ENCODE measurements at regions of chr4 and their contacts with region 1.

Region 1: DNA sequence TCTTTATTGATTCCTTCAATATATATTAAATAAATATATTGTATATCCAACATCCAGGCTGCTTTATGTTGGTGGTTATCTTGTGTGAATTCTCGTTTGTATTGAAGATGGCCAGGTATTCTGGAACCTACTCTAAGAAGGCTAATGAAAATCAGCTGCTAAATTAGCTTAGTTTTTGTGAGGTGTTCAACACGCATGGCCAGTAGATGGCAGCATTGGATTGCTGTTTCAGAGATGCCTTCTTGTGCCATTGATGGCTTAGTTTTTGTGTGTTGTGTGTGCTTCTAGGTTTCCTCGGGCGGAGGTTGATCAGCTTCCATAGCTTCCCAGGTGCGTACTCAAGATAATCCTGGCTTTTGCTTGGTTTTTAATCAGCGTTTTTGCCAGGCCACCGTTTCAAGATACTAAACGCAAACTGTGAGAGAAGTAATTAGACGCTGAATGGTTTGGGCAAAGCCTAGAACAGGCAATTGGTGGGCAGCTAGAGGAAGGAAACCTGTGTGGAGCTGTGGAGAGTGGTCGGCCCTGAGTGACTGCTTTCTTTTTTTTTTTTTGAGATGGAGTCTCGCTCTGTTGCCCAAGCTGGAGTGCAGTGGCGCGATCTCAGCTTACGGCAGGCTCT is 15.1 kb downstream of the NOCT start:
- DNase-seq: peak; percentile 85
- ATAC-seq: peak; percentile 76
- H3K4me3 ChIP-seq: no peak overlapping the region
- H3K4me3 Mint-ChIP-seq: peak overlapping the region; percentile 1
- H3K27ac ChIP-seq: no peak overlapping the region
- H3K27ac Mint-ChIP-seq: no peak overlapping the region
- H3K4me1 ChIP-seq: peaks cover 18 to 20% of the 10 kb centered on the region in 2 donors
- H3K4me1 Mint-ChIP-seq: peaks cover 26% of the 10 kb centered on the region
- H3K27me3 ChIP-seq: no peaks in the 10 kb centered on the region
- H3K27me3 Mint-ChIP-seq: no peaks in the 10 kb centered on the region
- CTCF ChIP-seq: peak; percentile 87

Region 2: DNA sequence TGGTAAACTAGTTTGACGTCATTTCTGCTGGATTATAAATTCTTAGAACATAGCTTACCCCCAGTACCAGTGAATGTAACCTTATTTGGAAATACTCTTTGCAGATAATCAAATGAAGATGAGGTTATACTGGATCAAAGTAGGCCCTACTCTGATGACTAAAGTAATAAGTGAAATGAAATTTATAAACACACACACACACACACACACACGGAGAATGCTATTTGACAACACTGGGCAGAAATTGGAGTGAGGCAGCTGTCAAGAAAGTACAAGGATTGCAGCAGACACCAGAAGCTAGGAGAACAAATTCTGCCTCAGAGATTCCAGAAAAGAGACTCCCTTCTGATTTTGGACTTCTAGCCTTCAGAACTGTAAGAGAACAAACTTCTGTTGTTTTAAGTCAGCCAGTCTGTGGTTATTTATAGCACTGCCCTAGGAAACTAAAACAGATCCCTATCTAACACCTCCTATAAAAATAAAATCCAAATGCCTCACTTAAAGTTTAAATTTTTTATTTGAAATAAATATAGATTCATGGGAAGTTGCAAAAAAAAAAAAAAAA is 1947.1 kb before region 1 on chr4:
- CTCF ChIA-PET with region 1: no interaction called
- POLR2A ChIA-PET with region 1: no interaction called
- intact Hi-C with region 1: no loop called
- DNase-seq: no peak
- ATAC-seq: no peak
- H3K4me3 ChIP-seq: no peak overlapping the region
- H3K4me3 Mint-ChIP-seq: no peak overlapping the region
- H3K27ac ChIP-seq: no peak overlapping the region
- H3K27ac Mint-ChIP-seq: no peak overlapping the region
- H3K4me1 ChIP-seq: no peaks in the 10 kb centered on the region
- H3K4me1 Mint-ChIP-seq: no peaks in the 10 kb centered on the region
- H3K27me3 ChIP-seq: no peaks in the 10 kb centered on the region
- H3K27me3 Mint-ChIP-seq: no peaks in the 10 kb centered on the region
- CTCF ChIP-seq: no peak

Region 3: DNA sequence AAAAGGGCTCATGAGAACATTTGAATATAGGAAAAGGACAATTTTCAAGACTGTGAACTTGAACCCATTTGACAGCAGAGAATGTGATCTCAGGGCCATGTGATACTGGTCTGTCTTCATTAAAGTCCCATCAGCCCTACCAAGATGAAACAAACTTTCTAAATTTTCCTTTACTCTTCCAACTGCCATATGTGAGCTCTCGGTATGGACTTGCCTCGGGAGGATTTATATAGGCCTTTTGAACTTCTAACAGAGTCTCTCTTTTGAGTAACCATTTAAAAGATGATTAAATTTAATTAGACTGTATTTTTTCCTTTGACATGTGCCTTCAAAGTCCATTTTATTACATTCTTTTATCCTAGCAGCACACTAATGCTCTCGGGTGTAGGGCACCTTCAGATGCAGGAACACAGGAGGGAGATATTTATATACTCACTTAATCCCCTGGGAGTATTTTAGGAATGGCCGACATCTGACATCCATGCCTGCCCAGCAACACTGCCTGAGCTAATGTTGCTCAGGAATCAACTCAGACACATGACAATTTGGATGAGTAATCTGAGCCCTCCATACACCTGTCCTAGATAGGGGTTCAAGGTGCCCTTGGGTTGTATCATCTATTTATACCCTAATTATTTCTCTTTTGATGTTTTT is 943.5 kb before region 1 on chr4:
- CTCF ChIA-PET with region 1: no interaction called
- POLR2A ChIA-PET with region 1: no interaction called
- intact Hi-C with region 1: no loop called
- DNase-seq: no peak
- ATAC-seq: no peak
- H3K4me3 ChIP-seq: no peak overlapping the region
- H3K4me3 Mint-ChIP-seq: no peak overlapping the region
- H3K27ac ChIP-seq: no peak overlapping the region
- H3K27ac Mint-ChIP-seq: no peak overlapping the region
- H3K4me1 ChIP-seq: no peaks in the 10 kb centered on the region
- H3K4me1 Mint-ChIP-seq: no peaks in the 10 kb centered on the region
- H3K27me3 ChIP-seq: no peaks in the 10 kb centered on the region
- H3K27me3 Mint-ChIP-seq: peaks cover 14% of the 10 kb centered on the region
- CTCF ChIP-seq: no peak

Region 4: DNA sequence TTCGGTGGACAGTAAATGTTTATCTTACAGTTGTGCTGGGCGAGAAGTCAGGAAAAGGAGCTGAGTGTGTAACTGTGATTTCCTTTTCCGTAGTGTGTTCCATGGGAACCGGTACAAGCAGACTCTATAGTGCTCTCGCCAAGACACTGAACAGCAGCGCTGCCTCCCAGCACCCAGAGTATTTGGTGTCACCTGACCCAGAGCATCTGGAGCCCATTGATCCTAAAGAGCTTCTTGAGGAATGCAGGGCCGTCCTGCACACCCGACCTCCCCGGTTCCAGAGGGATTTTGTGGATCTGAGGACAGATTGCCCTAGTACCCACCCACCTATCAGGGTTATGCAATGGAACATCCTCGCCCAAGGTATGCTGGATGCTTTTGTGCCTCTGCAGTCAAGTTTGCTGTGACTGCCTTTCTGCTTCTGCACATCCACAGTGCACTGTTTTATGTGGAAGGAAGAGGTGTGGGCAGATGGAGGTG is 12.3 kb after region 1 on chr4:
- CTCF ChIA-PET with region 1: interaction called, 12 read pairs
- POLR2A ChIA-PET with region 1: interaction called, 3 read pairs
- intact Hi-C with region 1: no loop called
- DNase-seq: no peak
- ATAC-seq: no peak
- H3K4me3 ChIP-seq: no peak overlapping the region
- H3K4me3 Mint-ChIP-seq: no peak overlapping the region
- H3K27ac ChIP-seq: no peak overlapping the region
- H3K27ac Mint-ChIP-seq: no peak overlapping the region
- H3K4me1 ChIP-seq: no peaks in the 10 kb centered on the region
- H3K4me1 Mint-ChIP-seq: peaks cover 2% of the 10 kb centered on the region
- H3K27me3 ChIP-seq: no peaks in the 10 kb centered on the region
- H3K27me3 Mint-ChIP-seq: no peaks in the 10 kb centered on the region
- CTCF ChIP-seq: no peak

Region 5: DNA sequence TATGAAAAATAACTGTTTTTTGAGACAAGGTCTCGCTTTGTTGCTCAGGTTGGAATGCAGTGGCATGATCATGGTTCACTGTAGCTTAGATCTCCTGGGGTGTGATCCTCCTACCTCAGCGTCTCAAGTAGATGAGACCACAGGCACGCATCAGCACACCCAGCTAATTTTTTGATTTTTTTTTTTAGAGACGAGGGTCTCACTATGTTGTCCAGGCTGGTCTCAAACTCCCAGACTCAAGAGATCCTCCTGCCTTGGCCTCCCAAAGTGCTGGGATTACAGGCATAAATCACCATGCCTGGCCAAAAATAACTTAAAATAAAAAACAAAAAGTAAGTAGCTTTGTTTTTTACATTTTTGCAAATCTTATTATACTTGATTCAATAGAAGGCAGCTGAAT is 48.2 kb after region 1 on chr4:
- CTCF ChIA-PET with region 1: interaction called, 26 read pairs
- POLR2A ChIA-PET with region 1: no interaction called
- intact Hi-C with region 1: loop called (anchors 2 kb)
- DNase-seq: no peak
- ATAC-seq: no peak
- H3K4me3 ChIP-seq: no peak overlapping the region
- H3K4me3 Mint-ChIP-seq: no peak overlapping the region
- H3K27ac ChIP-seq: peak overlapping the region in 1 of 2 donors; percentile 39
- H3K27ac Mint-ChIP-seq: no peak overlapping the region
- H3K4me1 ChIP-seq: peaks cover 16 to 44% of the 10 kb centered on the region in 2 donors
- H3K4me1 Mint-ChIP-seq: peaks cover 56% of the 10 kb centered on the region
- H3K27me3 ChIP-seq: no peaks in the 10 kb centered on the region
- H3K27me3 Mint-ChIP-seq: no peaks in the 10 kb centered on the region
- CTCF ChIP-seq: no peak

Region 6: GRCh38 chr4:139099366-139099982 is 68.7 kb after region 1 on chr4:
- CTCF ChIA-PET with region 1: interaction called, 21 read pairs
- POLR2A ChIA-PET with region 1: no interaction called
- intact Hi-C with region 1: loop called (anchors 1 kb)
- DNase-seq: peak; percentile 87
- ATAC-seq: peak; percentile 75
- H3K4me3 ChIP-seq: no peak overlapping the region
- H3K4me3 Mint-ChIP-seq: no peak overlapping the region
- H3K27ac ChIP-seq: no peak overlapping the region
- H3K27ac Mint-ChIP-seq: no peak overlapping the region
- H3K4me1 ChIP-seq: no peaks in the 10 kb centered on the region
- H3K4me1 Mint-ChIP-seq: peaks cover 2% of the 10 kb centered on the region
- H3K27me3 ChIP-seq: no peaks in the 10 kb centered on the region
- H3K27me3 Mint-ChIP-seq: no peaks in the 10 kb centered on the region
- CTCF ChIP-seq: peak; percentile 89

Region 7: GRCh38 chr4:139295206-139295941 is 264.6 kb after region 1 on chr4:
- CTCF ChIA-PET with region 1: interaction called, 54 read pairs
- POLR2A ChIA-PET with region 1: no interaction called
- intact Hi-C with region 1: loop called (anchors 1 kb)
- DNase-seq: peak; percentile 96
- ATAC-seq: peak; percentile 98
- H3K4me3 ChIP-seq: peak overlapping the region; percentile 78 to 96 (median 91)
- H3K4me3 Mint-ChIP-seq: peak overlapping the region; percentile 97
- H3K27ac ChIP-seq: peak overlapping the region; percentile 89 to 92
- H3K27ac Mint-ChIP-seq: peak overlapping the region; percentile 96
- H3K4me1 ChIP-seq: peaks cover 16 to 23% of the 10 kb centered on the region in 2 donors
- H3K4me1 Mint-ChIP-seq: peaks cover 26% of the 10 kb centered on the region
- H3K27me3 ChIP-seq: no peaks in the 10 kb centered on the region
- H3K27me3 Mint-ChIP-seq: no peaks in the 10 kb centered on the region
- CTCF ChIP-seq: peak; percentile 93

Region 8: GRCh38 chr4:139619644-139620043 is 588.9 kb after region 1 on chr4:
- CTCF ChIA-PET with region 1: no interaction called
- POLR2A ChIA-PET with region 1: no interaction called
- intact Hi-C with region 1: no loop called
- DNase-seq: peak; percentile 15
- ATAC-seq: no peak
- H3K4me3 ChIP-seq: no peak overlapping the region
- H3K4me3 Mint-ChIP-seq: no peak overlapping the region
- H3K27ac ChIP-seq: no peak overlapping the region
- H3K27ac Mint-ChIP-seq: no peak overlapping the region
- H3K4me1 ChIP-seq: no peaks in the 10 kb centered on the region
- H3K4me1 Mint-ChIP-seq: no peaks in the 10 kb centered on the region
- H3K27me3 ChIP-seq: no peaks in the 10 kb centered on the region
- H3K27me3 Mint-ChIP-seq: peaks cover 9% of the 10 kb centered on the region
- CTCF ChIP-seq: peak; percentile 57

Region 9: GRCh38 chr4:139651282-139652194 is 620.8 kb after region 1 on chr4:
- CTCF ChIA-PET with region 1: interaction called, 82 read pairs
- POLR2A ChIA-PET with region 1: no interaction called
- intact Hi-C with region 1: no loop called
- DNase-seq: peak; percentile 82
- ATAC-seq: peak; percentile 81
- H3K4me3 ChIP-seq: no peak overlapping the region
- H3K4me3 Mint-ChIP-seq: no peak overlapping the region
- H3K27ac ChIP-seq: no peak overlapping the region
- H3K27ac Mint-ChIP-seq: no peak overlapping the region
- H3K4me1 ChIP-seq: no peaks in the 10 kb centered on the region
- H3K4me1 Mint-ChIP-seq: peaks cover 4% of the 10 kb centered on the region
- H3K27me3 ChIP-seq: no peaks in the 10 kb centered on the region
- H3K27me3 Mint-ChIP-seq: peaks cover 15% of the 10 kb centered on the region
- CTCF ChIP-seq: peak; percentile 98

Region 10: GRCh38 chr4:140448830-140449229 is 1418.1 kb after region 1 on chr4:
- CTCF ChIA-PET with region 1: no interaction called
- POLR2A ChIA-PET with region 1: no interaction called
- intact Hi-C with region 1: no loop called
- DNase-seq: no peak
- ATAC-seq: no peak
- H3K4me3 ChIP-seq: no peak overlapping the region
- H3K4me3 Mint-ChIP-seq: no peak overlapping the region
- H3K27ac ChIP-seq: no peak overlapping the region
- H3K27ac Mint-ChIP-seq: no peak overlapping the region
- H3K4me1 ChIP-seq: no peaks in the 10 kb centered on the region
- H3K4me1 Mint-ChIP-seq: no peaks in the 10 kb centered on the region
- H3K27me3 ChIP-seq: peaks cover 0 to 17% (median 0%) of the 10 kb centered on the region in 4 experiments
- H3K27me3 Mint-ChIP-seq: peaks cover 41% of the 10 kb centered on the region
- CTCF ChIP-seq: no peak